ENCODE measurements at regions of chr12 and their contacts with region 1.

Region 1: GRCh38 chr12:91667725-91668124 is 477.9 kb downstream of the BTG1 start:
- DNase-seq: no peak
- CTCF ChIP-seq: no peak

Region 2: GRCh38 chr12:91657032-91657431 is 10.7 kb before region 1 on chr12:
- CTCF ChIA-PET with region 1: interaction called, 13 read pairs
- POLR2A ChIA-PET with region 1: no interaction called
- DNase-seq: no peak
- CTCF ChIP-seq: no peak

Region 3: DNA sequence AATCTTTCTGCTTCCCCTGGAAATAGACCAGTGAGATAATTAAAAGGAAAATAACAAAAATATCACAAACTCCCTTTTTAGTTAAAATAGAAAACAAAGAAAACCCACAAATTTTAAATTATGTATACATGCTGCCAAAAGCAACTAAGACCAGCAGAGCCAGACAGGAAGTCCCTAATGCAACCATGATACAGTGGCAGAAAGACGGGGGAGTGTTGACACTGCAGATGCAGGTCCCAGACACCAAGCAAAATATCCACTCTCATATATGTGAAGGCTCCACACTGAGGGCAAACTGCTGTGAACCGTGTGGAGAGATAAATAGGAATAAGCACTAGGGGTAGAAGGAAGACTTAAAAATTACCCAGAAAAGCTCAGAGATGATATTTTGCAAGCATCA is 76.9 kb after region 1 on chr12:
- CTCF ChIA-PET with region 1: no interaction called
- POLR2A ChIA-PET with region 1: no interaction called
- DNase-seq: no peak
- CTCF ChIP-seq: no peak